ENCODE measurements at regions of chr18 and their contacts with region 1.

Region 1: DNA sequence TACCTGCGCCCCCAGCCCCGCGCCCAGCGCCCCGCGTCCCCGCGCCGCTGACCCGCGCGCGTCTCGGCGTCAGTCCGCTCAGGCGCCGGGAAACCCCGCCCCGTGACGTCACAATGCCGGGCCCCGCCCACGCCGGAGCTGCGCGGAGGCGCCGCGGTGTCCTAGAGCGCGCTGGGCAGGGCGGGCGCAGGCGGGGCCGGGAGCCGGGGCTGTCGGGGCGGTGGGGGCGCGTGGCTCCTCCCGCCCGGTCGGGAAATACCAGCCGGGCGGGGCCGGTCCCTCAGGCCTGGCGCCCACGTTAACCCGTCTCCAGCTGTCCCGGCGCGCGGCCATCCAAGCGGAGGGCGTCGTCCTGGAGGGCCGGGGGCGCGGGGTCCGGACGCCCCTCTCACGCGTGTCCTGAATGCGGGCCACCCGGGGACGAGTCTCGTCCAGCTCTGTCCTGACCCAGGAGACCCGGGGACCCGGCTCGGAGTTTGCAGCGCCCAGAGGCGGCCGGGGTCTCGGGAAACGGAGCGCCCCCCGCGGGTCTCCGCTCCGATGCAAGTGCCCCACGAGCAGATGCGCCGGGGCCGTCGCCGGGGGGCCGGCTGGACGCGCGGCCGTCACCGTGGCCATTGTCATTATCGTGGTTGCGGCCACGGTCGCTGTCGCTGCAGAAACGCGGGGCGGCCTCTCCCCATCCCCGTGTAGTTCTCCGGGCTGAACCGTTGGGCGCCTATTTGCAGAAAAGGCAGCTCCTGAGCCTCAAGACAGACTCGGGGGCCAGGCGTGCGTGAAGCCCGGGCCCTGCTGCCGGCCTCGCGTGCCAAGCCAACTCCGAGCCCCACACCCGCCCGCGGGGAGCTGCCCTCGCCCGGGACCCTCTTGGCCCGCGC is at the start of gene SLC66A2:
- DNase-seq: peak; percentile 94 to 97
- ATAC-seq: peak; percentile 89 to 96 (median 92)
- H3K4me3 ChIP-seq: peak within 1 kb of the TSS; percentile 56
- H3K4me3 Mint-ChIP-seq: peak within 1 kb of the TSS; percentile 90
- H3K27ac ChIP-seq: no peak within 1 kb of the TSS
- H3K27ac Mint-ChIP-seq: peak within 1 kb of the TSS; percentile 76 to 79
- H3K4me1 ChIP-seq: peaks cover 29% of the 10 kb centered on the region
- H3K4me1 Mint-ChIP-seq: peaks cover 21 to 30% of the 10 kb centered on the region in 2 donors
- H3K27me3 ChIP-seq: no peaks in the 10 kb centered on the region
- H3K27me3 Mint-ChIP-seq: no peaks in the 10 kb centered on the region
- CTCF ChIP-seq: no peak
- total RNA-seq, gene SLC66A2: 51.2 to 62.4 (median 54.1) TPM

Region 2: GRCh38 chr18:79962835-79963657 is 11.2 kb after region 1 on chr18:
- intact Hi-C with region 1: loop called (anchors 1 kb)
- DNase-seq: peak in 1 of 2 donors; percentile 77
- ATAC-seq: peak; percentile 17 to 76 (median 54)
- H3K4me3 ChIP-seq: no peak overlapping the region
- H3K4me3 Mint-ChIP-seq: peak overlapping the region; percentile 80
- H3K27ac ChIP-seq: no peak overlapping the region
- H3K27ac Mint-ChIP-seq: peak overlapping the region; percentile 58 to 77
- H3K4me1 ChIP-seq: peaks cover 29% of the 10 kb centered on the region
- H3K4me1 Mint-ChIP-seq: peaks cover 10 to 32% of the 10 kb centered on the region in 2 donors
- H3K27me3 ChIP-seq: no peaks in the 10 kb centered on the region
- H3K27me3 Mint-ChIP-seq: peaks cover 7 to 8% of the 10 kb centered on the region in 2 donors
- CTCF ChIP-seq: peak; percentile 16

Region 3: GRCh38 chr18:79988451-79989194 is 36.8 kb after region 1 on chr18 and contains the start of gene TXNL4A:
- intact Hi-C with region 1: loop called (anchors 5 kb)
- DNase-seq: peak; percentile 83 to 95
- ATAC-seq: peak; percentile 91 to 97 (median 92)
- H3K4me3 ChIP-seq: peak within 1 kb of the TSS; percentile 80
- H3K4me3 Mint-ChIP-seq: peak within 1 kb of the TSS; percentile 97
- H3K27ac ChIP-seq: peak within 1 kb of the TSS; percentile 90
- H3K27ac Mint-ChIP-seq: peak within 1 kb of the TSS; percentile 90 to 94
- H3K4me1 ChIP-seq: peaks cover 24% of the 10 kb centered on the region
- H3K4me1 Mint-ChIP-seq: peaks cover 32 to 33% of the 10 kb centered on the region in 2 donors
- H3K27me3 ChIP-seq: no peaks in the 10 kb centered on the region
- H3K27me3 Mint-ChIP-seq: peaks cover 0 to 2% of the 10 kb centered on the region in 2 donors
- CTCF ChIP-seq: no peak
- total RNA-seq, gene TXNL4A: 63.2 to 69.1 (median 66.4) TPM

Measured in natural killer cell (primary cell).